Activated naive CD4-positive, alpha-beta T cell treated with anti-CD3 and anti-CD28 coated beads for 36 hours (primary cell): ENCODE measurements at regions of chr6 and their contacts with region 1.

Region 1: GRCh38 chr6:97053643-97054411 is 129.3 kb downstream of the KLHL32 start:
- DNase-seq: no peak
- H3K4me3 Mint-ChIP-seq: no peak overlapping the region
- H3K27ac Mint-ChIP-seq: no peak overlapping the region
- H3K4me1 Mint-ChIP-seq: peaks cover 14% of the 10 kb centered on the region
- H3K27me3 Mint-ChIP-seq: no peaks in the 10 kb centered on the region

Region 2: GRCh38 chr6:96468681-96469224 is 585.1 kb before region 1 on chr6:
- CTCF ChIA-PET with region 1: no interaction called
- intact Hi-C with region 1: loop called (anchors 5 kb)
- DNase-seq: no peak
- H3K4me3 Mint-ChIP-seq: no peak overlapping the region
- H3K27ac Mint-ChIP-seq: no peak overlapping the region
- H3K4me1 Mint-ChIP-seq: peaks cover 10% of the 10 kb centered on the region
- H3K27me3 Mint-ChIP-seq: peaks cover 4% of the 10 kb centered on the region

Region 3: DNA sequence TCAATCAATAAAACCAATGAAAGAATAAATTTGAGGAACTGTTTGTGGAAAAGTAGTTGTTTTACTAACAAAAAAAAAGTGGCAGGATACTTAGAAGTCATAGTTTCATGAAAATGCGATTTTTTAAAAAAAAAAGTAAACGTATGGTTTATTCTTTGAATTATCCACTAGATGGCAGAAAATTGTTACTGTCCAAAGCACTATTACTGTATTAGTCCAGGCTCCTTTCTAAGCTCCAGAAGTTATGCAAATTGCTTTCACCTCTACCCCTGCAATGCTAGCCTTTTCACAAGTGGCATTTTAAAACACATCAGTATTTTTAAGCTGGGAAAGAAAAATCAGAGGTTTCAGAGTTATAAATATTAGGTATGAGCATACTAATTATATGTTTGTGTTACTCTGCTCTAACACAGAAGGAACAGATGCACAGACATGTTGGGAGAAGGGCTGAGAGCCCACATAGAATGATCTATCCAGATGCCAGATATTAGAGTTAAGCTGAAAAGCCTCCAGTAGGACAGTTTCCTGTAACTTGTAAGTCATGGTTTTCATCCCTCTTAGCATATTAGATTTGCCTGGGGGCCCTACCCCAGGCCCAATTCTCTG is 427.0 kb before region 1 on chr6:
- CTCF ChIA-PET with region 1: interaction called, 14 read pairs
- intact Hi-C with region 1: loop called (anchors 1 kb)
- DNase-seq: no peak
- H3K4me3 Mint-ChIP-seq: no peak overlapping the region
- H3K27ac Mint-ChIP-seq: no peak overlapping the region
- H3K4me1 Mint-ChIP-seq: no peaks in the 10 kb centered on the region
- H3K27me3 Mint-ChIP-seq: peaks cover 4% of the 10 kb centered on the region

Region 4: GRCh38 chr6:96889146-96889545 is 164.7 kb before region 1 on chr6:
- CTCF ChIA-PET with region 1: no interaction called
- intact Hi-C with region 1: no loop called
- DNase-seq: no peak
- H3K4me3 Mint-ChIP-seq: no peak overlapping the region
- H3K27ac Mint-ChIP-seq: no peak overlapping the region
- H3K4me1 Mint-ChIP-seq: peaks cover 6% of the 10 kb centered on the region
- H3K27me3 Mint-ChIP-seq: no peaks in the 10 kb centered on the region

Region 5: DNA sequence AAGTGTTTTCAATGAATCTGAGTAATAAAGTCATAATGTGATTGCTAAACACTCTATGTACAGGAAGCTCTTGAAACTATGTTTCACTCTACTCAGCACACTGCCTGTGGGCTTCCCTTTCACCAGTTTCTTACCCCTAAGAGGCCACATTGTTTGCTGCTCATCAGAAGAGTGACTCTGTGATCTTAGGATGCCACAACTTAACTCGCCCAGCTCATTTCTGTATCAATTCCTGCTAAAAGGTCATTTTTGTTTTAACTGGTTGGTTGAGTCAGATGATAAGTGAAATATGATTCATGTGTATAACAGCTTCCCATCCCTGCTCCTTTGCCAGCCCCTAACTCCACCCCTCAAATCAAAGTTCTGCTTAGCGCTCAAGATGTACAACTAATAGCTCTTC is 146.3 kb before region 1 on chr6:
- CTCF ChIA-PET with region 1: interaction called, 24 read pairs
- intact Hi-C with region 1: loop called (anchors 1 kb)
- DNase-seq: peak; percentile 79
- H3K4me3 Mint-ChIP-seq: no peak overlapping the region
- H3K27ac Mint-ChIP-seq: peak overlapping the region; percentile 72
- H3K4me1 Mint-ChIP-seq: peaks cover 24% of the 10 kb centered on the region
- H3K27me3 Mint-ChIP-seq: peaks cover 22% of the 10 kb centered on the region

Region 6: DNA sequence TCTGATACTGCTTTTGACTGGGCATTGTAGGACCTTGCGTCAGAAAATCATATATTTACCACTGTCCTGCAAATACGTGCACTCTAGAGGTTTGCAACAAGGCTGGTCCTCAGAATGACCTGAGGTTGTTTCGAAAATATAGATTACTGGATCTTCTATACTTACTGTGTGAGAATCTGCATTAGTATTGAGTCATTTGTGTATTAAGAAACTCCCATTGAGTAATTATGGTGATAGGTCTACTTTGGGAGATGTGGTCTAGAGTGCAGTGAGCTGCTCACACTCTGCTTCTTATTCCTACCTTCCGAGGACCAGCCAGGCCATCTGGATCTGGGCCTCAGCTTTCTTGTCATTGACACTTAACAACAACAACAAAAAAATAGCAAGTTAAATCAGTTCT is 119.7 kb before region 1 on chr6:
- CTCF ChIA-PET with region 1: no interaction called
- intact Hi-C with region 1: no loop called
- DNase-seq: no peak
- H3K4me3 Mint-ChIP-seq: no peak overlapping the region
- H3K27ac Mint-ChIP-seq: no peak overlapping the region
- H3K4me1 Mint-ChIP-seq: peaks cover 2% of the 10 kb centered on the region
- H3K27me3 Mint-ChIP-seq: peaks cover 3% of the 10 kb centered on the region